ENCODE measurements at regions of chr17 and their contacts with region 1.

Region 1: GRCh38 chr17:7435221-7435675 is at the start of gene TMEM102:
- DNase-seq: peak; percentile 98
- ATAC-seq: peak; percentile 71
- H3K4me3 Mint-ChIP-seq: peak within 1 kb of the TSS; percentile 90
- H3K27ac Mint-ChIP-seq: peak within 1 kb of the TSS; percentile 98
- H3K4me1 Mint-ChIP-seq: peaks cover 17% of the 10 kb centered on the region
- H3K27me3 Mint-ChIP-seq: peaks cover 17% of the 10 kb centered on the region
- CTCF ChIP-seq: no peak
- total RNA-seq, gene TMEM102: 13.5 to 15.3 TPM (median 13.9 TPM) in 3 replicates

Region 2: DNA sequence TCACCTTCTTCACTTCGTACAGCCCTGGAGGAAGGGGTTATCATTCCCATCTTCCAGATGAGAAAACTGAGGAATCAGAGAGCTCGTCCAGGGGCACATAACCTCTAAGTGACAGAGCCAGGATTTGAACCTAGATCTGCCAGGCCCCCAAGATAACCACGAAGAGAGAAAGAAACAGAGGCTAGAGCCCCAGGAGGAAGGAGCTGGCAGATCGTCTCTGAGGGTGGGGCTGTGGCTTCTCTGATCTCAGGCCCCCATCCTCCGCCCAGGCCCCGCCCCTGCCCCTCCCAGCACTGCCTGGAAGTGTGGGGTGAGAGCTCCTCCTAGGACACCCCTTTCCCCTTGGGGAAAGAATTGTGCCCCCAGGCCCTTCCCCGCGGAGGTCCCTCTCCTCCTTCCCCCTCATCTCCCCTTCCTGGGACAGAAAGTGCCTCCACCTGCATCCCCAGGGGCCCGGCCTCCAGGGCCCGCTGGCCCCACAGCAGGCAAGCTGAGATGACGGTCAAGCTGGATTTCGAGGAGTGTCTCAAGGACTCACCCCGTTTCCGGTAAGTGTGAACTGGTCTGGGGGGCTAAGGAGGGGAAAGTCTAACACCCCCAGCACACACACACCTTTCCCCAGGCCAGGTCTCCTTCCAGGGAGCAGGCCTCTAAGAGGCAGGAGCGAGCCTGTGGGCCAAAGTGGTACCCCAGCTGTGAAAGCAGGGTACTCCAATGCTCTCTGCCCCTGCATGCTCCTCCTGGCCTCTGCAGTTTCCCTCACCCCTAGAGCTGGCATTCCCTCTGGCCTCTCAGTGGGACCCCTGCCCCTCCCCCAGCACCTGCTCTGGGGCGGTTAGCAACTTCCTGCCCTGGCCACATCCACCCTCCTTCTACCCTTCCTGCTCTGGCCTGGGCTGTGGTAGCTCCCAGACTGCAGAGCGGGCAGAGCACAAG is 98.7 kb before region 1 on chr17 and contains the start of gene ACAP1:
- CTCF ChIA-PET with region 1: interaction called, 12 read pairs
- POLR2A ChIA-PET with region 1: interaction called, 5 read pairs
- DNase-seq: peak; percentile 78
- ATAC-seq: peak; percentile 96
- H3K4me3 Mint-ChIP-seq: peak within 1 kb of the TSS; percentile 63
- H3K27ac Mint-ChIP-seq: peak within 1 kb of the TSS; percentile 98
- H3K4me1 Mint-ChIP-seq: peaks cover 34% of the 10 kb centered on the region
- H3K27me3 Mint-ChIP-seq: no peaks in the 10 kb centered on the region
- CTCF ChIP-seq: no peak
- total RNA-seq, gene ACAP1: 58.6 to 63.9 TPM (median 60.6 TPM) in 3 replicates

Region 3: DNA sequence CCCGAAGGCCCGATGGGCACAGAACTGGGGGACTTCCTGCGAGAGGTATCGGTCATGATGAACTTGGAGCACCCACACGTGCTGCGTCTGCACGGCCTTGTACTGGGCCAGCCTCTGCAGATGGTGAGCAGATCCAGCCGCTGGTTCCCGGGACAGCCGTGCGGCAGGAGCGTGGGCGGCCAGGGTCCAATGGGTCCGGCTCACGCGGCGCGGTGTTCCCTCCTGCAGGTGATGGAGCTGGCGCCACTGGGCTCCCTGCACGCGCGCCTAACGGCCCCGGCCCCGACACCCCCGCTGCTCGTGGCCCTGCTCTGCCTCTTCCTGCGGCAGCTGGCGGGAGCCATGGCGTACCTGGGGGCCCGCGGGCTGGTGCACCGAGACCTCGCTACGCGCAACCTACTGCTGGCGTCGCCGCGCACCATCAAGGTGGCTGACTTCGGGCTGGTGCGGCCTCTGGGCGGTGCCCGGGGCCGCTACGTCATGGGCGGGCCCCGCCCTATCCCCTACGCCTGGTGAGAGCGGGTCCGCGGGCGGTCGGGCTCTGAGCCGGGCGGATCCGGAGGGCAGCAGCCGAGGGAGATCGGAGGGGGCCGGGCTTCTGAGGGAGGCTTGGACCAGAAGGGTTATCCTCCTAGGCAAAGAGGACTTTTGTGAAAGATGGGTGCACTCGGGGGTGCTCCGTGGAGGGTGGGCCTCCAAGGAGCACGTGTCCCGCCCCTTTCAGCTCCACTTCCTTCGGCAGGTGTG is 51.3 kb before region 1 on chr17:
- CTCF ChIA-PET with region 1: interaction called, 10 read pairs
- POLR2A ChIA-PET with region 1: no interaction called
- DNase-seq: peak; percentile 87
- ATAC-seq: peak; percentile 85
- H3K4me3 Mint-ChIP-seq: peak overlapping the region; percentile 58
- H3K27ac Mint-ChIP-seq: no peak overlapping the region
- H3K4me1 Mint-ChIP-seq: peaks cover 26% of the 10 kb centered on the region
- H3K27me3 Mint-ChIP-seq: peaks cover 45% of the 10 kb centered on the region
- CTCF ChIP-seq: no peak

Region 4: GRCh38 chr17:7394452-7395191 is 40.6 kb before region 1 on chr17 and contains the start of gene PLSCR3:
- CTCF ChIA-PET with region 1: interaction called, 51 read pairs
- POLR2A ChIA-PET with region 1: interaction called, 3 read pairs
- DNase-seq: peak; percentile 87
- ATAC-seq: peak; percentile 78
- H3K4me3 Mint-ChIP-seq: peak within 1 kb of the TSS; percentile 90
- H3K27ac Mint-ChIP-seq: peak within 1 kb of the TSS; percentile 85
- H3K4me1 Mint-ChIP-seq: peaks cover 11% of the 10 kb centered on the region
- H3K27me3 Mint-ChIP-seq: no peaks in the 10 kb centered on the region; the same call in 1 of the 2 replicates
- CTCF ChIP-seq: no peak
- total RNA-seq, gene PLSCR3: 34.1 to 42.7 TPM (median 37.6 TPM) in 3 replicates

Region 5: DNA sequence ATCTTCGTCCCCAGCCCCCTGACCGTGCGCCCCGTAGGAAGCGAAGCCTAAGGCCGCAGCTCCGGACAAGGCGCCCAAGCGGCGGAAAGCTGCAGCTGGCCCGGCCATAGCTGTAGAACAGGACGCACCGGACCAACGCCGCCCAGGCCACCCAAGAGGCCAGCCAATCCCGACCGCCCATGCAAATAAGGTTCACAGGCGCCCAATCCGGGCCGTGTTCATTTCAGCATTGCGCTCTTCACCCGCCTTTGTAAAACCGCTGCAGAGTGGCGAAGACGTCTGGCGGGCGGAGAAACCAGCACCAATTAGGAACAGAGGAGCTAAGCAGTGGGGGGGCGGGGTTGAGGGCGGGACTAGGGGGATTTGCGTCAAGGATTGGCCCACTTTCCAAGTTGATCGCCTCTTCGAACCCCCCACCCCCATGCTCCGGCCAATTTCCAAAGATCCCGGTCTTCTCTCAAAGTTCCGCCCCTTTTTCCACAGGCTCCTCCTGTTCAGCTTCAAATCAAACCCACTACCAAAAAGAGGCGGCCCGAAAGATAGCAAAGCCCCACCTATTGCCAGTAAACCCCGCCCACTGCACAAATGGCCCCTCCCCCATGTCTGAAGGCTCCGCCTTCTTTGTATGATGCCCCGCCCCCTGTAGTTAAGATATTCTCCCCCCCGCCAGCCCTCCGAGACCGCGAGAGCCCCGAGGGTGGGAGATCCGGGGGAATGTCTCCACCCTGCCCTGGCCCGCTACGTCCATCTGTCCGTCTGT is 31.1 kb before region 1 on chr17 and contains the start of gene TMEM256:
- CTCF ChIA-PET with region 1: interaction called, 30 read pairs
- POLR2A ChIA-PET with region 1: interaction called, 38 read pairs
- DNase-seq: peak; percentile 99
- ATAC-seq: peak; percentile 87
- H3K4me3 Mint-ChIP-seq: peak within 1 kb of the TSS; percentile 84
- H3K27ac Mint-ChIP-seq: peak within 1 kb of the TSS; percentile 85
- H3K4me1 Mint-ChIP-seq: peaks cover 29% of the 10 kb centered on the region
- H3K27me3 Mint-ChIP-seq: no peaks in the 10 kb centered on the region; the same call in 1 of the 2 replicates
- CTCF ChIP-seq: no peak
- total RNA-seq, gene TMEM256: 132 to 180 TPM (median 178 TPM) in 3 replicates

Region 6: GRCh38 chr17:7484067-7484918 is 49.0 kb after region 1 on chr17 and contains the start of gene POLR2A:
- CTCF ChIA-PET with region 1: interaction called, 27 read pairs
- POLR2A ChIA-PET with region 1: interaction called, 15 read pairs
- DNase-seq: peak; percentile 96
- ATAC-seq: peak; percentile 65
- H3K4me3 Mint-ChIP-seq: peak within 1 kb of the TSS; percentile 90
- H3K27ac Mint-ChIP-seq: peak within 1 kb of the TSS; percentile 99
- H3K4me1 Mint-ChIP-seq: peaks cover 60% of the 10 kb centered on the region
- H3K27me3 Mint-ChIP-seq: no peaks in the 10 kb centered on the region
- CTCF ChIP-seq: no peak
- total RNA-seq, gene POLR2A: 166 to 170 TPM (median 170 TPM) in 3 replicates

Measured in WTC11 (cell line).